Activated T-helper 2 cell treated with anti-CD3 and anti-CD28 coated beads, Interferon-gamma antibody, Interleukin-2, Interleukin-4, amounts not matched to agents 10 μg/mL and 5 μg/mL and 100 μg/mL, durations not matched to agents 14 hours and 24 hours and 36 hours (primary cell): ENCODE measurements at regions of chr10 and their contacts with region 1.

Region 1: DNA sequence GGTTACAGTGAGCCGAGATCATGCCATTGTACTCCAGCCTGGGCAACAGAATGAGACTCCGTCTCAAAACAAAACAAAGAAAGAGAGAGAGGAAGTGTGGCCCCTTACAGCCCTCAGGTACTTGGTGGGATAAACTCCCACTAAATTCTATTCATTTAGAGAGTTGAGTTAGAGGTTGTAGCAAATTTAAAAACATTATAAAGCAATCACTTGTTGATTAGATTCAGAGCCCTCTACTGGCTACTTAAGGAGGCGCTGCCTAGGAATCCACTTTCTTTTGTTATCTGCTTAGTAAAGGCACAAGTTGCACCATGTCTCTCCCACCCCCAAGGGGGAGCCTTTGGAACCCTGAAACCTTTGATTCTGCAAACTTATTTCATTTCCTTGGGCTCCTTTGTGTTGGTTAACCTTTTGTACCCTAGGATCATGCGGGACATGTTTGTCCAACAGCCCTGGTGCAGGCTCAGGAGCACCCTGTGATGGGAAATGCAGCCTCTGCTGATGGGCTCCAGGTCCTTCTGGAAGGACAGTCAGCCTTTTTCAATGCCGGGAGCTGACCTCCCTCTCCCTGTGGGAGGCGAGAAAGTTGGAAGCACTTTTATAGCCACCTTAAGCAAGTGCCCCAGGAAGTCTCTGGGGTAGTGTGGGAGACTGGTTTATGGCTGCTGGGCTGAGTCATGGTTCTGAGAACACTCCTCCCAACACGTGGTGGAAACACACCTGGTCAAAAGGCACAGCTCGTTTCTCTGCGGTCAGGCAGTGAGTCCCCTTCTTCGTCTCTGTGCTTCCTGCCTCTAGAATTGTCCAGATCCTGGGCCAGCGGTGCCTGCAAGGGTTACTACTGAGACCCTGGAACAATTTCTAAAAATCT is 2.3 kb downstream of the HKDC1 start:
- DNase-seq: peak; percentile 76
- H3K4me3 Mint-ChIP-seq: peak overlapping the region; percentile 44
- H3K27ac Mint-ChIP-seq: peak overlapping the region; percentile 91
- H3K4me1 Mint-ChIP-seq: peaks cover 41% of the 10 kb centered on the region
- H3K27me3 Mint-ChIP-seq: no peaks in the 10 kb centered on the region

Region 2: GRCh38 chr10:68997211-68997610 is 225.2 kb before region 1 on chr10:
- intact Hi-C with region 1: loop called (anchors 5 kb)
- DNase-seq: no peak
- H3K4me3 Mint-ChIP-seq: no peak overlapping the region
- H3K27ac Mint-ChIP-seq: peak overlapping the region; percentile 81
- H3K4me1 Mint-ChIP-seq: peaks cover 29% of the 10 kb centered on the region
- H3K27me3 Mint-ChIP-seq: no peaks in the 10 kb centered on the region

Region 3: GRCh38 chr10:69123747-69124562 is 98.4 kb before region 1 on chr10 and contains the start of gene VPS26A:
- intact Hi-C with region 1: loop called (anchors 10 kb)
- DNase-seq: peak; percentile 98
- H3K4me3 Mint-ChIP-seq: peak within 1 kb of the TSS; percentile 94
- H3K27ac Mint-ChIP-seq: peak within 1 kb of the TSS; percentile 86
- H3K4me1 Mint-ChIP-seq: peaks cover 21% of the 10 kb centered on the region
- H3K27me3 Mint-ChIP-seq: no peaks in the 10 kb centered on the region
- total RNA-seq, gene VPS26A: 28.4 and 31.1 TPM in 2 replicates

Region 4: GRCh38 chr10:69179743-69180524 is 42.5 kb before region 1 on chr10 and contains the start of gene SUPV3L1:
- intact Hi-C with region 1: loop called (anchors 1 kb)
- DNase-seq: peak; percentile 83
- H3K4me3 Mint-ChIP-seq: peak within 1 kb of the TSS; percentile 99
- H3K27ac Mint-ChIP-seq: peak within 1 kb of the TSS; percentile 100
- H3K4me1 Mint-ChIP-seq: peaks cover 26% of the 10 kb centered on the region
- H3K27me3 Mint-ChIP-seq: no peaks in the 10 kb centered on the region
- total RNA-seq, gene SUPV3L1: 52.8 and 53.1 TPM in 2 replicates

Region 5: DNA sequence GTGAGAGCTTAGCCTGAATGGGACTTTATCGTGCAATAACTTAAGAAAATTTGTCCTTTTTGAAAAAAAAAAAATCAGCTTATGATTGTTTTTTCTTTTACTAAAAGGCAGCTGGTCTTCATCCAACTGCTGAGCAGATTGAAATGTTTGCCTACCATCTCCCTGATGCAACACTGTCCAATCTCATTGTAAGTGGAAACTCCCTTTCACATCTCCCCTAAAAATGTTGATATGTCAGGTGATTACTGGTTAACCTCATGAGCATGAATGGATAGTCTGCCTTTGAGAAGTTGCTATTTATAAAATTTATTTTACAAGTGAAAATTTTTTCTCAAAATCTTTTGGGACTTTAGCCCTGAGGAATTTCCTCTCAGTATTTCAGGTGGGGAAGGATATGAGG is 20.1 kb before region 1 on chr10:
- intact Hi-C with region 1: loop called (anchors 1 kb)
- DNase-seq: no peak
- H3K4me3 Mint-ChIP-seq: peak overlapping the region; percentile 54
- H3K27ac Mint-ChIP-seq: peak overlapping the region; percentile 73
- H3K4me1 Mint-ChIP-seq: peaks cover 42% of the 10 kb centered on the region
- H3K27me3 Mint-ChIP-seq: no peaks in the 10 kb centered on the region

Region 6: GRCh38 chr10:69360485-69361324 is 138.3 kb after region 1 on chr10:
- intact Hi-C with region 1: no loop called
- DNase-seq: no peak
- H3K4me3 Mint-ChIP-seq: no peak overlapping the region
- H3K27ac Mint-ChIP-seq: peak overlapping the region; percentile 33
- H3K4me1 Mint-ChIP-seq: peaks cover 42% of the 10 kb centered on the region
- H3K27me3 Mint-ChIP-seq: no peaks in the 10 kb centered on the region